ENCODE measurements at regions of chr15 and their contacts with region 1.

Region 1: DNA sequence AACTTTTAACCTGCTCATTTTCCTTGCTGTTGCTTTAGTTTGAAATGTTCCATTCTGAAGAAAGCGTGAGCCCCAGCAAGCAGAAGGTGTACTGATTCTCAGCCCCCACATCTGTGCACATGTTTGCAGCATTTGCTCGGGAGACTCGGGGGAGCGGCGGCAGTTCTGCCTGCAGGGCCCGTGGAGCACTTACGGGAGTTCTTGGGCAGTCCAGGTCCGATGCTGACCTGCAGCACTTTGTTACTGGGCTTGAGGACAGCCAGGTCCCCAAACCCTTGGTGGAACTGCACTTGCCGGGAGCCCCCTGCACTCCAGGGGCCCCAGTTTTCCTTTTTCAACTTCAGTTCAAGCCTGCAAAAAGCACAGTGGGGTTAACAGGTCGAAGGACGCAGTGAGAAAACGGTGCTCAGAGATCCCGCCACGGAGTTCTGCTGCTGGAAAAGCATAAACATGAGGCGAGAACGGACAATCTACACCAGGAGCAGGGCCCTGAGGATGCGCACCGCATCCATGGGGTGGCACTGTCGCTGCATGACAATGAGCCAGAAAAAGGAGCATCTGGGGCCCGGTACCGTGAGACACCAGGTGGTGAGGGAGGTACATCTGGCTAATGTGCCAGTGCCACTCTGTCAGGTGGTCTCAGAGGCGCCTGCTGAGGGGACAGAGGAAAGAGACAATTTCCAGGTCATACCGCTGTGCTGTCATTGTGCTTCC is 45.6 kb upstream of the LDHAL6B start:
- DNase-seq: peak; percentile 46
- H3K4me3 Mint-ChIP-seq: no peak overlapping the region
- H3K27ac Mint-ChIP-seq: peak overlapping the region; percentile 46
- H3K4me1 Mint-ChIP-seq: peaks cover 14% of the 10 kb centered on the region
- H3K27me3 Mint-ChIP-seq: no peaks in the 10 kb centered on the region
- CTCF ChIP-seq: peak; percentile 45

Region 2: DNA sequence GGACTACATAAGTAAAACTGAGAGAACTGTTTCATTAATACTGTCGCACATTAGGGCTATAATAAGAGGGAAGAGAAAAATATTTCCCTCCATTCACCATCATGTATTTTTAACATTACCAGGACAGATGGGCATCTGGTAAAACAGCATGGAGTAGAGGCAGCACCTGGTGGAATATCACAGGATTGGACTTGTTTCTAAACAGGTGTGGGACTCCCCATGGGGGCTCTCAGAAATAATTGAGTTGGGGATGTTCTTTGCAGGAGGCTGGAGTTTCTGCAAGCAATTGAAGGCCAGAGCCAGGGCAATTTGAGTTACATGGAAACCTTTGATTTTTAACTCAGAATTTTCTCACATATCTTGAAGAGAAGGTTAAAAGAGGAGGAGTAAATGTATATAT is 398.3 kb before region 1 on chr15:
- CTCF ChIA-PET with region 1: no interaction called
- POLR2A ChIA-PET with region 1: no interaction called
- intact Hi-C with region 1: no loop called
- DNase-seq: no peak
- H3K4me3 Mint-ChIP-seq: no peak overlapping the region
- H3K27ac Mint-ChIP-seq: no peak overlapping the region
- H3K4me1 Mint-ChIP-seq: peaks cover 6% of the 10 kb centered on the region
- H3K27me3 Mint-ChIP-seq: no peaks in the 10 kb centered on the region
- CTCF ChIP-seq: no peak

Region 3: GRCh38 chr15:59410391-59410896 is 249.4 kb after region 1 on chr15:
- CTCF ChIA-PET with region 1: interaction called, 10 read pairs
- POLR2A ChIA-PET with region 1: no interaction called
- intact Hi-C with region 1: no loop called
- DNase-seq: no peak
- H3K4me3 Mint-ChIP-seq: no peak overlapping the region
- H3K27ac Mint-ChIP-seq: no peak overlapping the region
- H3K4me1 Mint-ChIP-seq: no peaks in the 10 kb centered on the region
- H3K27me3 Mint-ChIP-seq: no peaks in the 10 kb centered on the region
- CTCF ChIP-seq: no peak

Region 4: DNA sequence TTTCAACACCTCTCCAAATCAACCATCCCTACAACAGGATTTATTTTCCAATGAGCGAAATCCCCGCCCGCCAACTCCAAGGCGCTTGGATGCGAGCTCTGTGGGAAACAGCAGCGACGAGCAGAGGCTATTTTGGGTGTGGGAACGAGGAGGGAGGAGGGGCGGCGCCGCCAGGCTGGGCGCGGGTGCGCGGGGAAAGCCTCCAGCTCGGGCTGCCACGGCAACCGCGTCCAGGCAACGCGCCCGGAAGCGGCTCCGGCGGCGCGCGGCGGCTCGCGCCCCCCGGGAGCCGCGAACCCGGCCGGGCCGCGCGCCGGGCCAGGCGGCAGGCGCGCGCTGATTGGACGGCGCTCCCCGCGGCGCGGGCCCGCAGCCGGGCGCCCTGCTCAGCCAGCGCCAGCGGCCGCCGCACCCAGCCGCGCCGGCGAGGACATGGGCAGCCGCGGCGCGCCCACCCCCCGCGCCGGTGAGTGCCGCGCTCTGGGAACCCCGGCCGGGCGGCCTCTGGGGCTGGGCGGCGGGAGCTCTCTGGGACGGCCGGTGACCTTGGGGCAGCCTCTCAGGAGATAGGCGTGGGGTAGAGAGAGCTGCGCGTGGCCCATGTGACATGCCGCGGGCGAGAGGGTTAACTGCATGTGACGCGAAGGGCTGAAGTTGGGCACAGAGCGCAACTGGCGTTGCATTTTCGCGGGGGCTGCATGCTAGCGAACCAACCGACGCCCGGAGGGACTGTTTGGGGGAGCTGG is 277.0 kb after region 1 on chr15 and contains the start of gene FAM81A:
- CTCF ChIA-PET with region 1: no interaction called
- POLR2A ChIA-PET with region 1: no interaction called
- intact Hi-C with region 1: no loop called
- DNase-seq: peak; percentile 71
- H3K4me3 Mint-ChIP-seq: peak within 1 kb of the TSS; percentile 73
- H3K27ac Mint-ChIP-seq: no peak within 1 kb of the TSS
- H3K4me1 Mint-ChIP-seq: no peaks in the 10 kb centered on the region
- H3K27me3 Mint-ChIP-seq: no peaks in the 10 kb centered on the region
- CTCF ChIP-seq: no peak
- total RNA-seq, gene FAM81A: 1.1 TPM in 2 replicates

Measured in MCF 10A (cell line).